HAP-1 (cell line): ENCODE measurements at regions of chr3 and their contacts with region 1.

Region 1: DNA sequence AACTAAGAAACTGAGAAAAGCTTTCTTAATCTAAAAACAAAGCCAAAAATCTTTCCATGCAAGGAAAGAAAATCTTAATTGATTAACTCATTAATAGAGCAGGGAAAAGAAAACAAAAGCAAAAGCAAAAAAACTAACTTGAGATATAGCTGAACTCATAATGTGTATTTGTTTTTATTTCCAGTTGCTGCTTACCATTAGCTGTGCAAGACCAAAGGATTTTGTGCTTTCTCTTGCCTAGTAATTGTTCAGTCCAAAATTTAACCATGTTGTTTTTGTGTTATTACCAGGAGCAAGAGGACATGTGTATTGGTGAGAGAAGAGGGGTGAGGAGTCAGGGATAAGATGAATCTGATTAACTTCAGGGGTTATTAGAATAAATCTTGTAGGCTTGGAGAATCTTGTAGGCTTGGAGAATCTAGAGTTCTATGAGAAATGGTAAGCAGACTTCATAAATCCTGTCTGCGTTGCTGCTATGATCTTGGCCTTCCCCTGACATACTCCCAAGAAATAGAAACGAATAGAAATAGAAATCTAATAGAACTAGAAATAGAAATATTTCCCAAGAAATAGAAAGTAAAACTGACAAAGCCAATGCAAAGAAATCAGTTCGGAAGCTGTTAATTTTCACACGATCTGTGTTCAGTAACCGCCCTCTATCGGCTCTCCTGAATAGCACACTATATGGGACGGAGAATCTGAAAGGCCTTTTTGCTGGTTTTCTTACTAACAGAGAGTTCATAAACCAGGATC is 72.6 kb upstream of the TNFSF10 start:
- DNase-seq: peak; percentile 32 to 61
- H3K4me3 ChIP-seq: no peak overlapping the region
- H3K4me1 ChIP-seq: peaks cover 5% of the 10 kb centered on the region; the same call in 1 of the 2 replicates
- H3K27me3 ChIP-seq: no peaks in the 10 kb centered on the region

Region 2: GRCh38 chr3:172476347-172476746 is 119.5 kb before region 1 on chr3:
- in situ Hi-C with region 1: loop called (anchors 10 kb)
- DNase-seq: no peak
- H3K4me3 ChIP-seq: no peak overlapping the region
- H3K4me1 ChIP-seq: peaks cover 5% of the 10 kb centered on the region
- H3K27me3 ChIP-seq: no peaks in the 10 kb centered on the region; the same call in 1 of the 2 replicates